ENCODE measurements at regions of chr17 and their contacts with region 1.

Region 1: DNA sequence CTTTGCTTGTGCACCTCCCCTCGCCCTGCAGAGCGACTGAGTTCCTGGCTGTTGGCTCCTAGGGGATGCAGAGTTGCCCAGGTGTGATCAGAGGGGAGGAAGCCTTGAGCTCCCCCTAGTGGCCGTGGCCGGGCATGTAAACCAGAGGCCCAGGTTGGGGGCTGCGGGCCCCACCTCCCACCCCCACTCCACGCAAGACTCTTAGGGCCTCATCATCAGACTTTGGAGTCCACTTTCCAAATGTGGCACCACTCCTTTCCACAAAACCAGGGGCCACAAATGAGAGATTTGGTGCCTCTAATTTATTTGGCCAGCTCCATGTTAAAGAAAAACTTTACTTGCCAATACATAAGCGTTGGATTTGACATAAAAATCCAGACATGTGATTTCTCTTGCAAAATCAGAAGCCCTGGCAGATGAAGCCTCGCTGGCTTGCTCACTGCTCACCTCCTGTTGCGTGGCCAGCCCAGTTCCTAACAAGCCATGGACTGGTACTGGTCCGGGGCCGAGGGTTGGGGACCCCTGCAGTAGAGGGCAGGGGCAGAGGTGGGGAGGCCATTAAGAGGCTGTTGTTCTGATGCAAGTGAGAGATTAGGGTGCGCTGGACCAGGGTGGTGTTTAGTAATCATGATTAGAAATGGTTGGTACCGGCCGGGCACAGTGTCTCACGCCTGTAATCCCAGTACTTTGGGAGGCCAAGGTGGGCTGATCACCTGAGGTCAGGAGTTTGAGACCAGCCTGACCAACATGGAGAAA is 28.7 kb upstream of the GAS7 start:
- DNase-seq: peak; percentile 75
- ATAC-seq: peak; percentile 78
- H3K4me3 Mint-ChIP-seq: no peak overlapping the region
- H3K27ac Mint-ChIP-seq: no peak overlapping the region
- H3K4me1 Mint-ChIP-seq: no peaks in the 10 kb centered on the region
- H3K27me3 Mint-ChIP-seq: no peaks in the 10 kb centered on the region
- CTCF ChIP-seq: peak; percentile 93

Region 2: GRCh38 chr17:9924735-9925191 is 302.3 kb before region 1 on chr17:
- CTCF ChIA-PET with region 1: interaction called, 9 read pairs
- POLR2A ChIA-PET with region 1: no interaction called
- intact Hi-C with region 1: loop called (anchors 10 kb)
- DNase-seq: no peak
- ATAC-seq: peak; percentile 67
- H3K4me3 Mint-ChIP-seq: no peak overlapping the region
- H3K27ac Mint-ChIP-seq: no peak overlapping the region
- H3K4me1 Mint-ChIP-seq: no peaks in the 10 kb centered on the region
- H3K27me3 Mint-ChIP-seq: no peaks in the 10 kb centered on the region
- CTCF ChIP-seq: peak; percentile 86

Region 3: GRCh38 chr17:9971991-9972599 is 255.0 kb before region 1 on chr17:
- CTCF ChIA-PET with region 1: interaction called, 14 read pairs
- POLR2A ChIA-PET with region 1: no interaction called
- intact Hi-C with region 1: loop called (anchors 10 kb)
- DNase-seq: no peak
- ATAC-seq: no peak
- H3K4me3 Mint-ChIP-seq: no peak overlapping the region
- H3K27ac Mint-ChIP-seq: no peak overlapping the region
- H3K4me1 Mint-ChIP-seq: peaks cover under 1% of the 10 kb centered on the region
- H3K27me3 Mint-ChIP-seq: no peaks in the 10 kb centered on the region
- CTCF ChIP-seq: no peak

Region 4: DNA sequence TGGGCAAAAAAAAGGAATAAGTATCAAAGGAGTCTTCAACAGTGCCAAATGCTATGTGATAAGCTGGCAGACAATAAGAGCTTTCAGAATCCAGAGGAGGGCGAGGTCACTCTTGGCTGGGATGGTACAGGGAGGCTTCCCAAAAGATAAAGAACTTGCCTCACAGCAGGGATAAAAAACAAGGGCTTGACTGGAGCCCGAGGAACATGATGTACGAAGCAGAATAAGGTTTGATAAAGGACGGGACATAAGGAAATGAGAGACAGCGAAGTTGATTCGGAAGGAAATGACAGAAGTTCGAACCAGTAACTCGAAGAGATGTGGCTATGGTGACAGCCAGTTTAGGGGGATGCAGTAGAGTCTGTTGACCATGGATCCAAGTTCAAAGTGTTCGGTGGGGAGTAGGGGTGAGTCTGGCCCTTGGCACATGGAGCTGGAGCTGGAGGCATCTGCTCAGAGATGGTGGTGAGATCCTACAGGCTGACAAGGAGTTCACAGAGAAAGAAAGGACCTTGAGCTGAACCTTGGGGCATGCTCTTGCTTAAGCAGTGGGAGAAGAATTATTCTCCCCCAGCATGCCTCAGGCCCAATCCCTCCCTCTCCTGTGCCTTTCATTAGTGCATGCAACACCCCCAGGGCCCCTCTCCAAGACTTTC is 184.4 kb before region 1 on chr17:
- CTCF ChIA-PET with region 1: no interaction called
- POLR2A ChIA-PET with region 1: no interaction called
- intact Hi-C with region 1: no loop called
- DNase-seq: no peak
- ATAC-seq: no peak
- H3K4me3 Mint-ChIP-seq: no peak overlapping the region
- H3K27ac Mint-ChIP-seq: no peak overlapping the region
- H3K4me1 Mint-ChIP-seq: peaks cover 26% of the 10 kb centered on the region
- H3K27me3 Mint-ChIP-seq: no peaks in the 10 kb centered on the region
- CTCF ChIP-seq: no peak

Region 5: DNA sequence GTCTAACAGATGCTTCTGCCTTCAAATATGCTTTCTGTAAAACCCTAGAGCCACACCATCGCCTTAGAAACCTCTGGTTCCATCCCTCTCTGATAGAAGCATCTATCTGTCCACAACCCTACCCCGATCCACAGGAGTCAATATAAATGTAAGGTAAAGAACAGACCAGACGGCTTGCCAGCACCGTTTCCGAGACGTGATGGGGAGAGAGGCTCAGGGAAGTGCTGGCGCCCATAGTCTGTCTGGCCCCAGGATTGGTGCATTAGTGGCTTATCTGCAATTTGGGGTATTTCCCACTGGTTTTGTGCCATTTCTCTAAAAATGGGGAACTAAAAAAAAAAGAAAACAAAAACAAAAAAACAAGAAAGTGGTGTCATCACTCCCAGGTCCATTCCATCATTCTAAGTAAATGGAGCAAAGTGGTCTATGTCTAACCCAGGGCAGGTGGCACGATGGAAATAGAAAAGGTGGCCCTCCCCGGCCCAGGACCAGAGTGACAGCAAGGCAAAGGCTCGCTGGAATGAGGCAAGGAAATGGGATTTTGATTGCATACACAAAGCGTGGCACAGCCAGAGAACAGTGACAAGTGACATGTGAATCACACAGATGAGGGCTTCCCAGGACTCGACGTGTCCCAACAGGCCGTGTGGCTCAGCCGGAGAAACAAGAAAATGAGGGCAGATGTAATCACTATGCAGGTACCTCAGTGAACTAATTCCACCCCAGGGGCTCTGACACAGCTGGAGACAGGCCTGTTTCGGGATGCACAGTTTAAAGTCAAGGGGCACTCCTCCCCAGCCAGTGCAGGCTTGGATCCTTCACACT is 154.3 kb before region 1 on chr17:
- CTCF ChIA-PET with region 1: no interaction called
- POLR2A ChIA-PET with region 1: no interaction called
- intact Hi-C with region 1: loop called (anchors 10 kb)
- DNase-seq: no peak
- ATAC-seq: no peak
- H3K4me3 Mint-ChIP-seq: no peak overlapping the region
- H3K27ac Mint-ChIP-seq: no peak overlapping the region
- H3K4me1 Mint-ChIP-seq: peaks cover 2% of the 10 kb centered on the region
- H3K27me3 Mint-ChIP-seq: no peaks in the 10 kb centered on the region
- CTCF ChIP-seq: no peak

Region 6: DNA sequence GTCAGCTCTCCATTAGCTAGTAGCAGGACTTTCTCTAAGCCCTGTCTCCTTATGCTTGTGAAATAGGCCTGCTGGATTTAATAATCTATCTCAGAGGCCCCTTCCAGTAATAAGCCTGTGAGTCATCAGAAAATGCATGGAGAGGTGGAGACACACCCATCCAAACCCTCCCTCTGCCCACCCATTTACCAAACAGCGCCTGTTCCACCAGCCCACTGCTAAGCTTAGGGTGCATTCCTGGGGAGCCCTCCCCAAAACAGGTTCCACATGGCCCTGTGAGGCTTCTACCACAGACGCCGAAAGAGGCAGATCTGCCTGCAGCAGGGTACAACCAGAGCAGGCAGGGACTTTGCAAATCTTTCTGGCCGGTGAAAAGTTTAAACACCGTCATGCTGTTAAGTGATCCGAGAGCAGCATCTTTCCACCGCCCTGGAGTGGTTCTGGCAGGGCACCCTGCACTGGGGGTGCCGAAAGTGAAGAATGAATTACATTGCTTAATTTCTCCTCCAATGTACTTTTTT is 128.0 kb before region 1 on chr17:
- CTCF ChIA-PET with region 1: no interaction called
- POLR2A ChIA-PET with region 1: no interaction called
- intact Hi-C with region 1: no loop called
- DNase-seq: no peak
- ATAC-seq: no peak
- H3K4me3 Mint-ChIP-seq: no peak overlapping the region
- H3K27ac Mint-ChIP-seq: no peak overlapping the region
- H3K4me1 Mint-ChIP-seq: peaks cover 2% of the 10 kb centered on the region
- H3K27me3 Mint-ChIP-seq: no peaks in the 10 kb centered on the region
- CTCF ChIP-seq: no peak

Region 7: DNA sequence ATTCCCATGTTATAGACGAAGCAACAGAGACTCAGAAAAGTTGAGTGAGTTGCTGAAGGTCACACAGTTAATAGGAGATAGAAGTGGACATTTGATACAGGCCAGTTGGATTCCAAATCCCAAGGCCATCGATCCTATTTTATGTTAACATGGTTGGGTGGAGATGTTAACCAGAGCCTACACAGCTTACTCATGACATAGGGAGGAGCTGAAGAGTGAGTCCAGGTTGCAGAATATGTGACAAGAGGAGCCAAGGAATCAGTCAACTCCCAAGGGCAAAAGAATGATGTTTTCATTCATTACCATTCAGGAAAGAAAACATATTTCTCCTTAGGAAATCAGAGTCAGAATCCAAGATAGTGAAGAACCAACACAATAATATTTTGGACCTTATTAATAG is 11.6 kb after region 1 on chr17:
- CTCF ChIA-PET with region 1: interaction called, 18 read pairs
- POLR2A ChIA-PET with region 1: no interaction called
- intact Hi-C with region 1: no loop called
- DNase-seq: no peak
- ATAC-seq: no peak
- H3K4me3 Mint-ChIP-seq: no peak overlapping the region
- H3K27ac Mint-ChIP-seq: no peak overlapping the region
- H3K4me1 Mint-ChIP-seq: no peaks in the 10 kb centered on the region
- H3K27me3 Mint-ChIP-seq: peaks cover 3% of the 10 kb centered on the region
- CTCF ChIP-seq: no peak

Region 8: GRCh38 chr17:10314329-10314728 is 87.2 kb after region 1 on chr17:
- CTCF ChIA-PET with region 1: no interaction called
- POLR2A ChIA-PET with region 1: no interaction called
- intact Hi-C with region 1: no loop called
- DNase-seq: no peak
- ATAC-seq: no peak
- H3K4me3 Mint-ChIP-seq: no peak overlapping the region
- H3K27ac Mint-ChIP-seq: no peak overlapping the region
- H3K4me1 Mint-ChIP-seq: peaks cover 3% of the 10 kb centered on the region
- H3K27me3 Mint-ChIP-seq: peaks cover 11% of the 10 kb centered on the region
- CTCF ChIP-seq: no peak

Region 9: DNA sequence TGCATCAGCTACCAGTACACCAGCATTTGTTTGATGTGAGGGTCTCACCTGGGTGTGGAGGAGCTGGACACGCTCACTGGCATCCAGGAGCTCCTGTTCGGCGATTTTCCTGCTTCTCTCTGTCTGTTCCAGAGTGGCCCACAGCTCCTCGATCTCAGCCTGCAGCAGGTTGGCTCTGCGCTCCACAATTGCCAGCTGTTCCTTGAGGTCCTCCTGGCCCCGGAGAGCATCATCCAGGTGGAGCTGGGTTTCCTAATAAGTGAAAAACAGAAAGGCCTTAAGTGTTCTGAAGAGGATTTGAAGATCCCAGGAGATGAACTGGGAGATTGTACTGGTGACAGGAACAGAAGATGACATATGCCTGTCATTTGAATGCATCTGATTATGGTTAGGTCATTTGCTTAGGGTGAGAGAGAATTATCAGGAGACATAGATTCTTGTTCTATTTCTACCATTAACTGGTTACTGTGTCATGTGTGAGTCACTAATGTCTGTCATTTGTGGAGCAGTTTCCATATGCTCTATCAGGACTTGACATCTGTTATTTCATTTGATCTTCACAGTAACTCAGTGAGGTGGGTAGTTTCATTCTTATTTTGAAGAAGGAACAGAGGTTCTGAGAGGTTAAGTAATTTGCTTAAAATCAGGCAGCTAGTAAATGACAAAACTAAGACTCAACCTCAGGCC is 167.2 kb after region 1 on chr17:
- CTCF ChIA-PET with region 1: no interaction called
- POLR2A ChIA-PET with region 1: no interaction called
- intact Hi-C with region 1: no loop called
- DNase-seq: no peak
- ATAC-seq: no peak
- H3K4me3 Mint-ChIP-seq: no peak overlapping the region
- H3K27ac Mint-ChIP-seq: no peak overlapping the region
- H3K4me1 Mint-ChIP-seq: no peaks in the 10 kb centered on the region
- H3K27me3 Mint-ChIP-seq: peaks cover 3% of the 10 kb centered on the region
- CTCF ChIP-seq: no peak